Heart right ventricle (tissue), 16 donors: ENCODE measurements at regions of chr12 and their contacts with region 1.

Region 1: DNA sequence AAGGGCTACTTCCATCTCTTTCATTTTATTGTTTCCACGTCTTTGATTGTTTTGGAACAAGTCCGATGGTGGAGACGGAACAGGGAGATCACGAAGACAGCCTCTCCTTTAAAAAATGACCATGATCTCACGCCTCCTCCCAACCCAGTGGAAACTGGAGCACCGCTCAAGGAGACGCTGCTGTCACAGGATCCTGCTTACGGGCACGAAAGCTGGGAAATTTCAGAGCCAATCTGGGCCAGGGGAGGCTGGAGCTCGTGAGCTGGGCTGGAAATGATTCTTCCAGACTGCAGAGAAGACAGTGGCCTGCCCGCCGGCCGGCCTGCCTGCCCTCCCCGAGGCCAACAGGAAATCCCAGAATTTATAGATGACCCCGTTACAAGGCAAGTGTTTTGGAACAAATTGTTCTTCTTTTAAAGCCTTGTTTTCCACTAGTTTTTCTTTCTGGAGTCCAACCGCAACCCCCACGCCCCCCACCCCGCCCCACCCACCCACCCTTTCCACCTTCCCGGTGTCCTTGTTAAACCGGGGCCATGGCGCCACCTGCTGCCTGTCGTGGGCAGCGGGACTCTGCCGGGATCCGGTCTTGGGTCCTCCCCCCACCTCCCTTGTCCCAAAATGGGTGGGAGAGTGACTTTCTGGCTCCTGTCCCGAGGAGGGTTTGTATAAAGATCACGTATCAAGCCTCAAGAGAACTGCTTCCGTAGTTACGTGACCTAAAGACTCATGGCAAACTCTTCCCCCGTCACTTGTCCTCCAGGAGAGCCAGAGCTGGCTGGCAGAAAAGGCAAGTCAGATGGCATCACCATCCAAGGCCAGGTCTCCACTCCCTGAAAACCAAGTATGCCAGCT is 40.3 kb downstream of the MAP1LC3B2 start:
- DNase-seq: peak; percentile 84 to 86
- ATAC-seq: peak; percentile 85 to 96 (median 91)
- H3K4me3 ChIP-seq: peak overlapping the region in 9 of 10 donors; percentile 5 to 50 (median 39)
- H3K27ac ChIP-seq: peak overlapping the region; percentile 46 to 90 (median 82)
- H3K4me1 ChIP-seq: peaks cover 6 to 42% (median 22%) of the 10 kb centered on the region in 9 donors
- H3K27me3 ChIP-seq: no peaks in the 10 kb centered on the region
- CTCF ChIP-seq: peak; percentile 46 to 82 (median 74)

Region 2: DNA sequence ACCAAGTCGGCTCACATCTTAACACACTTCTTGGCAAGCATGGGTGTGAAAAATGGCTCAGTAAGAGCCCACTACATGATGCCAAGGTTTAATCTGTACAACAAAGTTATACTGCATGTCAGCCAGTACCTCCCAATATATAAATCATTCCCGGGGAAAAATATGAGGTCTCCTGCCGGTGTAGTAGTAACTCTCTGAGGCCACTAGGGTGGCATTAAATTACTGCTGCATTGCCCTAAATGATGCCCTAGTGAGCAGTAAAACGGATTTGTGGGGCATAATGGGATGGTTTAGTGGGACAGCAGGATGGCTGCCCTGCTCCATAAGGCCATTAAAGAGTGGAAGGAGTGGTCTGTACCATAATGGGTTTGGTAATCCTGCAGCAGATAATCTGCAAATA is 589.7 kb before region 1 on chr12:
- intact Hi-C with region 1: loop called in 6 of 10 experiments (anchors 5 to 10 kb)
- DNase-seq: no peak
- ATAC-seq: no peak
- H3K4me3 ChIP-seq: no peak overlapping the region
- H3K27ac ChIP-seq: no peak overlapping the region
- H3K4me1 ChIP-seq: peaks cover 0 to 4% (median 0%) of the 10 kb centered on the region in 9 donors
- H3K27me3 ChIP-seq: no peaks in the 10 kb centered on the region
- CTCF ChIP-seq: peak in 2 of 9 donors; percentile 18 to 31

Region 3: DNA sequence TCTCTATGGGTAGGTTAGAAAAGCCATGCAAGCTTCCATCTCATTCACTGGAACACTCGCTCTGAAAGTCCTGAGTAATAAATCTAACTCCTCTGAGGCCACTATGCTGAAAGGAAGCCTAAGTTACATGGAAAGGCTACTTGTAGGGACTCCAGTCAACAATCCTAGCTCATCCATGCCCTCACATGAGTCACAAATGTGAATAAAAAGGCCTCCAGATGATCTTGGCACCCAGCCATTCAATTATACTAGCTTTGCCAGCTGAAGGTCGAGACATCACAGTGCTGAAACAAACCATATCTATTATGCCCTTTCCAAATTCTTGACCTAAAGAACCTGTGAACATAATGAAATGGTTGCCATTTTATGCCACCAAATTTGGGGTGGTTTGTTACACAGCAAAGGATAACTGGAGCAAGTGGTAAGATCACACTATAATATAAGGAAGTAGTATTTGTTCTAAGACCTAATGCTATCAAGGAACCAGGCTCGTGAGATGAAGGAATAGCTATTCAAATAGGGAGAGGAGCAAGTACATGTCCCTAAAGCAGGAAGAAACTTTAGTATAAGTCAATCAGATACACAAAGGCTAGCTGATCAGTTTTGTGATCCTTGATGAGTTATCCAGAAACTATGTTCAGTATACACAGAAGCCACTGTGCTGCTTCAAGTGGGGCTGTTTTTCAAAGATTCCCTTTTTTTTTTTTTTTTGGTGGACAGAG is 464.1 kb before region 1 on chr12:
- intact Hi-C with region 1: loop called in 3 of 10 experiments (anchors 5 to 10 kb)
- DNase-seq: peak in 1 of 2 donors; percentile 27
- ATAC-seq: peak in 5 of 8 donors; percentile 15 to 52 (median 23)
- H3K4me3 ChIP-seq: no peak overlapping the region
- H3K27ac ChIP-seq: peak overlapping the region in 2 of 10 donors; percentile 15 to 18
- H3K4me1 ChIP-seq: peaks cover 0 to 91% (median 70%) of the 10 kb centered on the region in 9 donors
- H3K27me3 ChIP-seq: no peaks in the 10 kb centered on the region
- CTCF ChIP-seq: no peak

Region 4: DNA sequence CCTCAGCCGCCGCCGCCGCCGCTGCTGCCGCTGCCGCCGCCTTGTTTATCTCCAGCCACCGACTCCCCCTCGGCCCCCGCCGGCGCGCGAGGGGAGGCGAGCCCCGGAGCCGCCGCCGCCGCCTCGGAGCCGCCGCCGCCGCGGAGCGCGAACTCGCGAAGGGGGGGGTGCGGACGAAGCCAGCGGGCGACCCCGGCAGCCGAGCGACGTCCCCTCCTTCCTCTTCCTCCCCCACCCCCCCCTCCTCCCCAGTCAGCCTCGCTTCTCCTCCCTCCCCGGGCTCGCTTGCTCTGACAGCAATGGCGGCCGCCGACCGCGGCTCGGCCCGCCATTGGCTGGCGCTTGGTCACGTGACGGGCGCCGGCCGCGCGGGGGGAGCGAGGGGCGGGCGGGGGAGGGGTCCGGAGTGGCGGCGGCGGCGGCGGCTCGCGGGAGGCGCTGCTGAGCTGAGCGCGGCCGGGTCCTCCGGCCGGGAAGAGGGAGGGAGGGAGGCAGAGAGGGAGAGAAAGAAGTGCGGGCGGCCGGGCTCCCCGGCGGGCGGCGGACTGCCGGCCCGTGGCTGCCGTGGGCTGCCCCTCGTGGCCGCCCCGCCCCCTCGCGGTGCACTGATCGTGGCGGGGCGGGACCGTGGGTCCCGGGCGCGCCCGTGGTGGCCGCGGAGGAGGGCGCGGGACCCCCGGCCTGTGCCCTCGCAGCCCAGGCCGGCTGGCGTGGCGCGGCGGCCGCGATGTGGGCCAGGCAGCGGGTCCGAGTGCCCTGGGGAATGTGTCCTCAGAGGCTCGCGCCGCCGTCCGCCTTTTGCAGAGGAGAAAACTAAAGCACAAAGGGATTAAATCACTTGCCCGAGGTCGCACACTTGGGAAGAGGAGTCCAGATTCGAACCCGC is 321.9 kb before region 1 on chr12 and contains the start of gene MED13L:
- intact Hi-C with region 1: loop called in 9 of 10 experiments (anchors 1 to 10 kb)
- DNase-seq: peak; percentile 87 to 91
- ATAC-seq: peak; percentile 90 to 96 (median 94)
- H3K4me3 ChIP-seq: peak within 1 kb of the TSS; percentile 77 to 96 (median 88)
- H3K27ac ChIP-seq: peak within 1 kb of the TSS; percentile 89 to 100 (median 95)
- H3K4me1 ChIP-seq: peaks cover 0 to 56% (median 29%) of the 10 kb centered on the region in 9 donors
- H3K27me3 ChIP-seq: no peaks in the 10 kb centered on the region
- CTCF ChIP-seq: peak in 7 of 9 donors; percentile 15 to 73 (median 52)
- total RNA-seq, gene MED13L: 53.8 to 76.5 (median 67.0) TPM

Region 5: GRCh38 chr12:116455540-116456329 is 143.8 kb before region 1 on chr12:
- intact Hi-C with region 1: loop called in 5 of 10 experiments (anchors 2 to 10 kb)
- DNase-seq: peak; percentile 49 to 89
- ATAC-seq: peak; percentile 88 to 95 (median 93)
- H3K4me3 ChIP-seq: peak overlapping the region in 5 of 10 donors; percentile 0 to 18 (median 11)
- H3K27ac ChIP-seq: peak overlapping the region; percentile 51 to 89 (median 82)
- H3K4me1 ChIP-seq: peaks cover 11 to 24% (median 23%) of the 10 kb centered on the region in 9 donors
- H3K27me3 ChIP-seq: peaks cover 0 to 3% (median 0%) of the 10 kb centered on the region in 7 donors
- CTCF ChIP-seq: no peak

Region 6: GRCh38 chr12:116677202-116677661 is 77.7 kb after region 1 on chr12:
- intact Hi-C with region 1: loop called in 2 of 10 experiments (anchors 5 kb)
- DNase-seq: no peak
- ATAC-seq: peak in 3 of 8 donors; percentile 7 to 28 (median 14)
- H3K4me3 ChIP-seq: no peak overlapping the region
- H3K27ac ChIP-seq: peak overlapping the region in 5 of 10 donors; percentile 41 to 83 (median 69)
- H3K4me1 ChIP-seq: peaks cover 6 to 46% (median 22%) of the 10 kb centered on the region in 9 donors
- H3K27me3 ChIP-seq: no peaks in the 10 kb centered on the region
- CTCF ChIP-seq: no peak